ENCODE measurements at regions of chr2 and their contacts with region 1.

Region 1: GRCh38 chr2:110677530-110678456 is at the start of gene BUB1:
- DNase-seq: peak; percentile 98
- ATAC-seq: peak; percentile 92
- H3K4me3 Mint-ChIP-seq: peak within 1 kb of the TSS; percentile 84
- H3K27ac Mint-ChIP-seq: peak within 1 kb of the TSS; percentile 94
- H3K4me1 Mint-ChIP-seq: peaks cover 42% of the 10 kb centered on the region
- H3K27me3 Mint-ChIP-seq: peaks cover 3% of the 10 kb centered on the region
- total RNA-seq, gene BUB1: 138 to 140 TPM

Region 2: GRCh38 chr2:110662560-110662959 is 15.2 kb before region 1 on chr2:
- CTCF ChIA-PET with region 1: interaction called, 5 read pairs
- POLR2A ChIA-PET with region 1: interaction called, 14 read pairs
- DNase-seq: no peak
- ATAC-seq: no peak
- H3K4me3 Mint-ChIP-seq: no peak overlapping the region
- H3K27ac Mint-ChIP-seq: no peak overlapping the region
- H3K4me1 Mint-ChIP-seq: peaks cover 7% of the 10 kb centered on the region
- H3K27me3 Mint-ChIP-seq: no peaks in the 10 kb centered on the region

Region 3: DNA sequence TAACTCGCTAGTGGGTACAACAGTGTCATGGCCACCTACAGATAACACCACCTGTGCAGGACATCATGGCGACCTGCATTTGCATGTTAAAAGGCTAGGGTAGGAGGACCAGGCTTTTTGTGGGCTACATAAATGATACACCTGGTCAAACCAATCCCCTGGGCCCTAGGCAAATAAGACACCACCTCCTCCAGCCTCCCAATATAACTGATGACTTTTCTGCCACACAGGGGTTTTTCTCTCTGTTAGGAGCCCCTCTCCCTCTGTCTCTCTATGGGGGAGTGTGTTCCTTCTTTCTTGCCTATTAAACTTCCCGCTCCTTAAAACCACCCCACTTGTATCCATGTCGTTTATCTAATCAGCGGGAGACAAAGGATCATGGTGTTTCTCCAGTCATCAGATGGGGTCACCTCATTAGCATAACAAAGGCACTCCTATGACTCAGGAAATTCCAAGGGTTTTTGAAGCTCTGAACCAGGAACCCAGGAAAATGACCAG is 10.8 kb after region 1 on chr2:
- CTCF ChIA-PET with region 1: no interaction called
- POLR2A ChIA-PET with region 1: interaction called, 10 read pairs
- DNase-seq: no peak
- ATAC-seq: no peak
- H3K4me3 Mint-ChIP-seq: no peak overlapping the region
- H3K27ac Mint-ChIP-seq: no peak overlapping the region
- H3K4me1 Mint-ChIP-seq: no peaks in the 10 kb centered on the region
- H3K27me3 Mint-ChIP-seq: peaks cover 27% of the 10 kb centered on the region

Region 4: DNA sequence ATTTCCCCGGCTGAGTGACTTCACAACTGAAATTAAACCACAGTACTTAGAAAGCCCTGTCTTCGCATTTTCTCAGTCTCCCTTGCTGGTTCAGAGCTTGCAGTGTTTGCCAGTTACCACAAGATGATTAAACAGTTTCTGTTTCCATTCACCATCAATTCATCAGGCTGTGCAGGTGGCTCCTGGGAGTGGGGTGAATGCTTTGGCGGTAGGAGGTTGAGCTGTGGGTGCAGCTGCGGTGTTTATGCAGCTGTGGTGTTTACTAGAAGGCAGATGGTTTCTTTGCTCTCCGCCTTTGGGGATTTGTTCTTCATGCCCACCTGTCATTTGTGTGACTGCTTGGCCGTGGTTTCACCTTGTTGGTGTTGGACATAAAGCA is 70.7 kb after region 1 on chr2:
- CTCF ChIA-PET with region 1: interaction called, 6 read pairs
- POLR2A ChIA-PET with region 1: interaction called, 25 read pairs
- DNase-seq: peak; percentile 85
- ATAC-seq: peak; percentile 99
- H3K4me3 Mint-ChIP-seq: peak overlapping the region; percentile 44
- H3K27ac Mint-ChIP-seq: peak overlapping the region; percentile 68
- H3K4me1 Mint-ChIP-seq: peaks cover 28% of the 10 kb centered on the region
- H3K27me3 Mint-ChIP-seq: peaks cover 25% of the 10 kb centered on the region

Region 5: GRCh38 chr2:110755491-110756078 is 77.8 kb after region 1 on chr2:
- CTCF ChIA-PET with region 1: interaction called, 34 read pairs
- POLR2A ChIA-PET with region 1: interaction called, 3 read pairs
- DNase-seq: no peak
- ATAC-seq: no peak
- H3K4me3 Mint-ChIP-seq: no peak overlapping the region
- H3K27ac Mint-ChIP-seq: no peak overlapping the region
- H3K4me1 Mint-ChIP-seq: no peaks in the 10 kb centered on the region
- H3K27me3 Mint-ChIP-seq: peaks cover 37% of the 10 kb centered on the region